Right cardiac atrium (tissue), 5 donors: ENCODE measurements at regions of chr12 and their contacts with region 1.

Region 1: DNA sequence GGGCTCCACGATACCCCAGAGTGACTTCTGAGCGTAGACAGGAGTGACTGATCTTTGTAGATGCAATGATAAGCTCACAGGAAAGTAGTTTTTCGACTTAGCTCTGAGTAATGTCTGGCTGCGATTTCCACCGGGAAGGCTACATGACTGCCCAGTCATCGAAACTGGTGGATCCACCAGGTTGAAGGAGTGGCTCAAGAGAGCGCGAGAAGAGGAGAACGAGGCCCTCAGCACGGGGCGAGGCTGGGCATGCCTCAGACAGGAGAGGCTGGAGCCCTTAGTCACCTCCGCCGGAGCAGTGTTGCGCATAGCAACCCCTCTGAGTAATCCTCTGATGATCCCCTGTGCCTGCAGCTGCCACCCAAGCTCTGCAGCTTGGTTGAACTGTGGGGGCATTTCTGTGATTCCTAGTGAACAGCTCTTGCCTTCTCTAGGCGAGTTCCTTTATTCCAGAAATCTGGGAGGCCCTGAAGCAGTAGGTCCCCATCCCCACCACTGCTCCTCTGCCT is 25.6 kb downstream of the ELK3 start:
- DNase-seq: no peak
- ATAC-seq: peak in 1 of 2 donors; percentile 65
- H3K4me3 ChIP-seq: no peak overlapping the region
- H3K27ac ChIP-seq: peak overlapping the region; percentile 9
- H3K4me1 ChIP-seq: peaks cover 2% of the 10 kb centered on the region
- H3K27me3 ChIP-seq: no peaks in the 10 kb centered on the region

Region 2: GRCh38 chr12:96061864-96062453 is 157.8 kb before region 1 on chr12:
- intact Hi-C with region 1: loop called (anchors 2 to 5 kb)
- DNase-seq: peak; percentile 75 to 88 (median 76)
- ATAC-seq: peak; percentile 83 to 88
- H3K4me3 ChIP-seq: no peak overlapping the region
- H3K27ac ChIP-seq: no peak overlapping the region
- H3K4me1 ChIP-seq: no peaks in the 10 kb centered on the region
- H3K27me3 ChIP-seq: no peaks in the 10 kb centered on the region

Region 3: DNA sequence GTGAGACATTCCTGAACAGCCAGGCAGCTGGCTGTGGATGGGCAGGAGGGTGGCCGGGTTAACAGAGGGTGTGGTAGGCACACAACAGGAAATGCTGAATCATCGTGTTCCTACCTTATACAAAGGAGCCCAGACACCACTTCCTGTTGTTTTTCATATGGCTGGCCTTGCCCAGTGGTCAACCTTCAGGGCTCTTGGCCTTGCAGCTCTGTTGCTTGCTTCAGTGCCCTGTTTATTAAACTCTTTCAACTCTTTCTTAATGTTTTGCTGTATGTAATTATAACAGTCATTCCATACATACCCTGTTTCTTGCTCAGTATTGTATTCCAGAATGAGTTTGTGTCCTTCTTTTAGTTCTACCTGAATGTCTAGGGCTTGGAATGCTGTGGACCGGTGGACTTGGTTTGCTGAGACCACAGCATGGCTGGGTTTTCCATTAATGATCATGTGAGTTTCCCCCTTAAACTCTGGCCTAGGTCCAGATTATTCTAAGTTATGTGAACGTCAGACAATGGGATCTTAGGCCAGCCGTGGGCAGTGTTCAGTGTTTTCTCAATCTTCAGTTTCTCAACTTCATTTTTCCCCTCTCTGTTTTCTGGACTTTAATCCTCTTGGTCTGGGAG is 281.5 kb after region 1 on chr12:
- intact Hi-C with region 1: loop called in 1 of 4 experiments (anchors 10 kb)
- DNase-seq: peak; percentile 39 to 65 (median 45)
- ATAC-seq: peak; percentile 90 to 98
- H3K4me3 ChIP-seq: no peak overlapping the region
- H3K27ac ChIP-seq: peak overlapping the region; percentile 91
- H3K4me1 ChIP-seq: peaks cover 2% of the 10 kb centered on the region
- H3K27me3 ChIP-seq: no peaks in the 10 kb centered on the region

Region 4: GRCh38 chr12:96516472-96517430 is 297.0 kb after region 1 on chr12:
- intact Hi-C with region 1: loop called in 2 of 4 experiments (anchors 5 to 10 kb)
- DNase-seq: peak; percentile 74 to 90 (median 76)
- ATAC-seq: peak; percentile 65 to 81
- H3K4me3 ChIP-seq: no peak overlapping the region
- H3K27ac ChIP-seq: no peak overlapping the region
- H3K4me1 ChIP-seq: no peaks in the 10 kb centered on the region
- H3K27me3 ChIP-seq: no peaks in the 10 kb centered on the region